AG04449 (cell line): ENCODE measurements at regions of chr1 and their contacts with region 1.

Region 1: GRCh38 chr1:205658943-205659581 is 21.2 kb downstream of the SLC45A3 start:
- DNase-seq: no peak
- H3K4me3 ChIP-seq: no peak overlapping the region
- CTCF ChIP-seq: peak; percentile 93

Region 2: GRCh38 chr1:205584732-205585131 is 74.3 kb before region 1 on chr1:
- CTCF ChIA-PET with region 1: interaction called, 741 read pairs
- POLR2A ChIA-PET with region 1: interaction called, 3 read pairs
- DNase-seq: no peak
- H3K4me3 ChIP-seq: no peak overlapping the region
- CTCF ChIP-seq: no peak

Region 3: GRCh38 chr1:205645519-205645918 is 13.5 kb before region 1 on chr1:
- CTCF ChIA-PET with region 1: interaction called, 148 read pairs
- POLR2A ChIA-PET with region 1: no interaction called
- DNase-seq: no peak
- H3K4me3 ChIP-seq: no peak overlapping the region
- CTCF ChIP-seq: no peak

Region 4: GRCh38 chr1:205719762-205720161 is 60.7 kb after region 1 on chr1:
- CTCF ChIA-PET with region 1: interaction called, 461 read pairs
- POLR2A ChIA-PET with region 1: interaction called, 3 read pairs
- DNase-seq: no peak
- H3K4me3 ChIP-seq: no peak overlapping the region
- CTCF ChIP-seq: no peak

Region 5: GRCh38 chr1:205812878-205813754 is 154.1 kb after region 1 on chr1 and contains the start of gene SLC41A1:
- CTCF ChIA-PET with region 1: interaction called, 14 read pairs
- POLR2A ChIA-PET with region 1: no interaction called
- DNase-seq: peak; percentile 52
- H3K4me3 ChIP-seq: peak within 1 kb of the TSS; percentile 80
- CTCF ChIP-seq: no peak

Region 6: DNA sequence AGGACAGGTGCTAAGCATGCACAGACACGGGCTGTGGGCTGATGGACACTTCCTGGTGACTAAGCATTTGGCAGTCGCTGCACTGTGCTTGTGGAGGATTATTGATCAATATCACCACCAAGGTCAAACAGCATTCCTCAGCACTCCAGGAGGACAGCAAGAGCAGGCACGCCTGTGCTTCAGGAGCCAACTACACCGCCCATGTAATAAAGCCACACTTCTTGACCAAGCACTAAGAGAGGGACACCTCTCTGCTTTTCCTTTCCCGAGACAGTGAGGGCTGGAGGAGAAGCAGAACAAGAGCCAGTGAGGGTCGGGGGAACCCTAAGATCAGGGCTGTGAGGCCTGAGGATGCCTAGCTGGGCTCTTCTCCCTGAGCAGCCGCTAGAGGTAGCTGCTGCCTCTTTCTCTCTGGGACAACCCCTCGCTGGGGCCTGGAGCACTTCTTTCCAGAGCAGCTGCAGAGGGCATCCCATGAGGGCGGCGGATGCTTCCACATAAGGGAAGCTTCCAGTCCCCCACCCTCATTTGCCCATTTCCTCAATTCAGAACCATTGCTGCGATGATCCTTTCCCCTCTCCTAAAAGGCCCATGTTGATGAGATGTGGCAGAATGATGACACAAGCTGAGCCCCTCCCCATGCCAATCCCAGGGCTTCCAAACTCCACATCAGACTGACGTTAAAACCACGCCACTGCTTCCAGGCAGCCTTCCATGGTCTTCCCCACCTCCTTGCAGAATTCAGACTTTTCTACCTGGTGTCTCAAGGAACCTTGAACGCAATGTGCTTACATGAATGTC is 325.1 kb after region 1 on chr1:
- CTCF ChIA-PET with region 1: interaction called, 139 read pairs
- POLR2A ChIA-PET with region 1: no interaction called
- DNase-seq: no peak
- H3K4me3 ChIP-seq: no peak overlapping the region
- CTCF ChIP-seq: peak; percentile 90